CD8-positive, alpha-beta T cell (primary cell): ENCODE measurements at regions of chr1 and their contacts with region 1.

Region 1: DNA sequence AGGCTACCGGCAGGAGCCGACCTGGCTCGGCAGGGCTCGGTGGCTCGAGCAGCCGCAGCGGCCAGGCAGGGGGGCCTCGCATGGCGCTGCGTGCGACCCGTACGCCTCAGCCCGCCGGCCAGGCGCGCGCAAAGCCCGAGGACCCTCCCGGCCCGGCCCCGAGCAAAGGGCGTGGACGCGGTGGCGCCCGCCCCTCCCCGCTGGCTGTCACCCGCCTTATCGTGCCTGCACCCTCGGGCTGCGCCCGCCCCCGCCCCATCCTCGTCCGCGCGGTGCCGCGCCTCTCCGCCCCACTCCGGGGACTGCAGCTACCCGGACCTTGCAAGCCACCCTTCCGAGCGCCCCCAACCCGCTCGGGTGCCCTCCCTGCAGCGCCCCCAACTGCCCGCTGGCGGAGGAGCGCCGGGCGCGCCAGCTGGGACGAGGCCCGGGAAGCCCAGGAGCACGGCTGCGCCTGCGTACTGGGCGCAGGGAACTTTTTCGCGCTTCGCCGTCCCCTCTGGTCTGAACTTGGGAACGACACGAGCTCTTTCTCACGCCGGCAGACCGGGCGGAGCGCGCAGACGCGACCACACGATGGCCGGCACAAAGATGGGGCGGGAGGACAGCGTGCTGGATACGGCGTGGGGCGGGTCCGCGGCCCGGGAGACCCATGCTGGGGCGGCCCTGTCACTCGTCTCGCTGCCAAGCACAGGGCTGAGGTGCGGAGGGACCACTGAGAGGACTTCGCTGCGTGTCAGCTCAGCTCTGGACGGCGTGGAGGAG is at the start of gene ABCB10:
- DNase-seq: peak; percentile 56 to 93 (median 81)
- ATAC-seq: peak; percentile 81
- H3K4me3 ChIP-seq: peak within 1 kb of the TSS; percentile 74 to 82
- H3K4me3 Mint-ChIP-seq: peak within 1 kb of the TSS; percentile 95
- H3K27ac ChIP-seq: peak within 1 kb of the TSS; percentile 52 to 70
- H3K27ac Mint-ChIP-seq: peak within 1 kb of the TSS; percentile 90
- H3K4me1 ChIP-seq: peaks cover 18% of the 10 kb centered on the region
- H3K4me1 Mint-ChIP-seq: peaks cover 37% of the 10 kb centered on the region
- H3K27me3 ChIP-seq: no peaks in the 10 kb centered on the region
- H3K27me3 Mint-ChIP-seq: no peaks in the 10 kb centered on the region
- CTCF ChIP-seq: peak; percentile 30
- total RNA-seq, gene ABCB10: 6.1 to 7.6 TPM

Region 2: DNA sequence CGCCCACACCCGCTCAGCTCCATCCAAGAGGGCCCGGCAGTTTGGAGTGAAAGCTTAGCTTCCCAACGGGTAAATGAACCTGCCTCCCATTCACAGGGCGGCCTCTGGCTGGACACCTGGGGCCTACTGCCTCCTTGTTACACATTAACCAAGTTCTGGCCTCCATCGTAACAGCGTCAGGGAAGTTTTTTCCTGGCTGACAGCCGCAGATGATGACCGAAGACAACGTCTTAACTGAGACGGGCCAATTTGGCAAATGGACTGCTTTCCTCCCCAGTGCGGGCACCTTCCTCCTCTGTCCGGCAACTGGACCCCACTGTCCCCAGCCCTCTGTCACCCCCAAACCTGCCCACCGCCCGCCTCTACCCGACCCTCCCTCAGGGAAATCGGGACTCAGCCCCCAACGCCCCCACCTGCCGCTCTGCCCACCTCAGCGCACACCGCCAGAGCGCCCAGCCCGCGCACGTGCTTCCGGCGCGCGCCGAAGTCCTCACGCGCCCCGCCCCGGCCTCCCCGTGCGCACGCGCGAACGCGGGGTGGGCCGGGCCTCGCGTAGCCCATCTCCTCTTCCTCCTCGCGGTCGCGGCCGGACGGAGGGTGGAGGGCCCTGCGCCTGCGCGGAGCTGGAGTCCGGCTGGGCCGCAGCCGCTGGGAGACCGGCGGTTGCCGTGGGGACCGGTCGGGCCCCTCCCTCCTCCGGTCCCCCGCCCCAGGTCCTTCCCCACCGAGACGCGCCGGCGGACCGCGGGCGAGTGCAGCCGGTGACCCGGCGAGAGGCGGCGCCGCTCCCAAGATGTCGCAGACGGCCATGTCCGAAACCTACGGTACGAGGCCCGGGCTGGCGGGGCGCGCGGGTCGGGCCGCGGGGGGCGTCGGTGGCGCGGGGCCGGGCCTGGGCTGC is 288.0 kb before region 1 on chr1 and contains the start of gene RAB4A:
- CTCF ChIA-PET with region 1: no interaction called
- POLR2A ChIA-PET with region 1: no interaction called
- intact Hi-C with region 1: loop called in 1 of 2 experiments (anchors 5 kb)
- DNase-seq: peak; percentile 44 to 90 (median 71)
- ATAC-seq: peak; percentile 86
- H3K4me3 ChIP-seq: peak within 1 kb of the TSS; percentile 70 to 84
- H3K4me3 Mint-ChIP-seq: peak within 1 kb of the TSS; percentile 98
- H3K27ac ChIP-seq: peak within 1 kb of the TSS; percentile 45 to 57
- H3K27ac Mint-ChIP-seq: peak within 1 kb of the TSS; percentile 83
- H3K4me1 ChIP-seq: peaks cover 31% of the 10 kb centered on the region
- H3K4me1 Mint-ChIP-seq: peaks cover 37% of the 10 kb centered on the region
- H3K27me3 ChIP-seq: no peaks in the 10 kb centered on the region
- H3K27me3 Mint-ChIP-seq: no peaks in the 10 kb centered on the region
- CTCF ChIP-seq: no peak
- total RNA-seq, gene RAB4A: 26.7 to 29.7 TPM

Region 3: DNA sequence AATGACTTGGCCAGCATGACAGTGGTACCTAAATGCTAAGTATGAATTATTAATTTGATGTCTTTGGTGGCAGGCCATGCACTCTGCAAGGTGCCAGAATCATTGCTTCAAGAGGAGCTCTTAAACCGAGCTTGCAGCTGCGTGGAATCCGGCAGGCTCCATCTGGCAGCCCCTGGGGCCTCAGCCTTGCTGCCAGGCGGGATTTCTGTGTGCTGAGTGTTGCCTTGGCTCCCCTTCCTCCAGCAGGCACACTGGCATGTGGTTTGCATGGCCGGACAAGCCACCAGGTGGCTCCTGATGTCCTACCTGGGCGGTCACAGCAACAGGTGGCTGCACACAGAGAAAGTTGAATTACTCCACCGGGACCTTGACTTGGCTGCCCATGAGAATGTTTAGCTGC is 222.7 kb after region 1 on chr1:
- CTCF ChIA-PET with region 1: no interaction called
- POLR2A ChIA-PET with region 1: no interaction called
- intact Hi-C with region 1: no loop called
- DNase-seq: no peak
- ATAC-seq: no peak
- H3K4me3 ChIP-seq: no peak overlapping the region
- H3K4me3 Mint-ChIP-seq: no peak overlapping the region
- H3K27ac ChIP-seq: no peak overlapping the region
- H3K27ac Mint-ChIP-seq: no peak overlapping the region
- H3K4me1 ChIP-seq: no peaks in the 10 kb centered on the region
- H3K4me1 Mint-ChIP-seq: no peaks in the 10 kb centered on the region
- H3K27me3 ChIP-seq: no peaks in the 10 kb centered on the region
- H3K27me3 Mint-ChIP-seq: no peaks in the 10 kb centered on the region
- CTCF ChIP-seq: no peak